ENCODE measurements at regions of chr9 and their contacts with region 1.

Region 1: GRCh38 chr9:71592400-71592799 is 175.9 kb downstream of the CEMIP2 start:
- DNase-seq: no peak
- H3K4me3 ChIP-seq: no peak overlapping the region
- H3K27ac ChIP-seq: no peak overlapping the region
- H3K4me1 ChIP-seq: no peaks in the 10 kb centered on the region
- H3K27me3 ChIP-seq: no peaks in the 10 kb centered on the region
- CTCF ChIP-seq: no peak

Region 2: GRCh38 chr9:71285191-71285656 is 307.2 kb before region 1 on chr9:
- intact Hi-C with region 1: loop called (anchors 10 kb)
- DNase-seq: peak; percentile 58
- H3K4me3 ChIP-seq: no peak overlapping the region
- H3K27ac ChIP-seq: no peak overlapping the region
- H3K4me1 ChIP-seq: no peaks in the 10 kb centered on the region
- H3K27me3 ChIP-seq: no peaks in the 10 kb centered on the region
- CTCF ChIP-seq: peak; percentile 81

Region 3: DNA sequence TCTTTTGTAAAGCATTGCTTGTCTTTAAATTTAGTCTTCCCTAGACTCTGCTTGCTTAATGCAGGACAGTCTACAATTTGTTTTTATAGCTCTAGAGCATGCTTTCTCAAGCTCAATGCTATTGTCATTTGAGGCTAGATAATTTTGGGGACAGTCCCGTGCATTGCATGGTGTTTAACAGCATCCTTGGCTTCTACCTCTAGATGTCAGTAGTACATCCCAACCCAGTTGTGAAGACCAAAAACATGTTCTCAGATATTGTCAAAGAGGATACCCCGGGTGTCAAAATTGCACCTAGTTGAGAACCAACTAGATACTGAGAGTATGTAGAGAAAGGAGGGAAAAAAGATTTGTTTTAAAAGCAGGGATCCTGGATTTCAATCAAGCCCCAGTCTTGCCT is 101.6 kb before region 1 on chr9:
- intact Hi-C with region 1: no loop called
- DNase-seq: no peak
- H3K4me3 ChIP-seq: no peak overlapping the region
- H3K27ac ChIP-seq: no peak overlapping the region
- H3K4me1 ChIP-seq: no peaks in the 10 kb centered on the region
- H3K27me3 ChIP-seq: no peaks in the 10 kb centered on the region
- CTCF ChIP-seq: no peak

Region 4: GRCh38 chr9:71683598-71684235 is 91.3 kb after region 1 on chr9:
- intact Hi-C with region 1: no loop called
- DNase-seq: no peak
- H3K4me3 ChIP-seq: no peak overlapping the region
- H3K27ac ChIP-seq: peak overlapping the region; percentile 16
- H3K4me1 ChIP-seq: peaks cover 13% of the 10 kb centered on the region
- H3K27me3 ChIP-seq: no peaks in the 10 kb centered on the region
- CTCF ChIP-seq: no peak

Measured in colonic mucosa (tissue), 4 donors.